Colonic mucosa (tissue), 4 donors: ENCODE measurements at regions of chr14 and their contacts with region 1.

Region 1: GRCh38 chr14:68795597-68796417 is 2.9 kb upstream of the ZFP36L1 start:
- DNase-seq: peak; percentile 84
- H3K4me3 ChIP-seq: peak overlapping the region; percentile 74
- H3K27ac ChIP-seq: peak overlapping the region; percentile 100
- H3K4me1 ChIP-seq: no peaks in the 10 kb centered on the region
- H3K27me3 ChIP-seq: no peaks in the 10 kb centered on the region
- CTCF ChIP-seq: peak; percentile 70

Region 2: DNA sequence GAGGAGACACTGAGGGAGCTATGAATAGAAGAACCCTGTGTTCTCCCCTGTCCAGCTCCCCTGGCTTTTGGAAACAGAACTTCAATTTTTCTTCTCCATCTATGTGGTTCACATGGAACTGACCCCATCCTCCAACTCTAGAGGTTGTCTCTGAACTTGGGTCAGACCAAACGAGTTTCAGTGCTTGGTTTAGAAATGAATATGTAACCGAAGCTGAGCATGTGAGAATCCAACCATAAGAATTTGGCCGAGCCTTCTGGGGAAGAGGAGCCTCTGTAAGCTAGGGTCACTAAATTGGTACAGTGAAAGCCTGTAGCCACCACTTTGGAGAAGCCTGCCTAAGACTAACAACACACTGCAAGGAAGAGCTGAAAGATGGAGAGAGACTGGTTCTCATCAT is 467.3 kb before region 1 on chr14:
- intact Hi-C with region 1: no loop called
- DNase-seq: no peak
- H3K4me3 ChIP-seq: no peak overlapping the region
- H3K27ac ChIP-seq: no peak overlapping the region
- H3K4me1 ChIP-seq: no peaks in the 10 kb centered on the region
- H3K27me3 ChIP-seq: no peaks in the 10 kb centered on the region
- CTCF ChIP-seq: no peak

Region 3: GRCh38 chr14:68520637-68521556 is 274.9 kb before region 1 on chr14:
- intact Hi-C with region 1: loop called (anchors 10 kb)
- DNase-seq: no peak
- H3K4me3 ChIP-seq: no peak overlapping the region
- H3K27ac ChIP-seq: peak overlapping the region; percentile 15
- H3K4me1 ChIP-seq: peaks cover 4% of the 10 kb centered on the region
- H3K27me3 ChIP-seq: no peaks in the 10 kb centered on the region
- CTCF ChIP-seq: no peak